ENCODE measurements at regions of chr1 and their contacts with region 1.

Region 1: GRCh38 chr1:113928941-113929749 is at the start of gene HIPK1:
- DNase-seq: peak; percentile 91 to 94
- ATAC-seq: peak; percentile 57 to 82 (median 58)
- H3K4me3 ChIP-seq: peak within 1 kb of the TSS; percentile 80
- H3K4me3 Mint-ChIP-seq: peak within 1 kb of the TSS; percentile 98
- H3K27ac ChIP-seq: peak within 1 kb of the TSS; percentile 98
- H3K27ac Mint-ChIP-seq: peak within 1 kb of the TSS; percentile 96 to 99
- H3K4me1 ChIP-seq: peaks cover 28% of the 10 kb centered on the region
- H3K4me1 Mint-ChIP-seq: peaks cover 55 to 59% of the 10 kb centered on the region in 2 donors
- H3K27me3 ChIP-seq: no peaks in the 10 kb centered on the region
- H3K27me3 Mint-ChIP-seq: no peaks in the 10 kb centered on the region
- CTCF ChIP-seq: no peak
- total RNA-seq, gene HIPK1: 238 to 283 (median 261) TPM

Region 2: GRCh38 chr1:113835642-113836307 is 93.4 kb before region 1 on chr1:
- intact Hi-C with region 1: loop called (anchors 1 kb)
- DNase-seq: peak in 1 of 2 donors; percentile 83
- ATAC-seq: peak in 2 of 3 donors; percentile 53 to 67
- H3K4me3 ChIP-seq: no peak overlapping the region
- H3K4me3 Mint-ChIP-seq: no peak overlapping the region
- H3K27ac ChIP-seq: no peak overlapping the region
- H3K27ac Mint-ChIP-seq: peak overlapping the region in 1 of 2 donors; percentile 66
- H3K4me1 ChIP-seq: no peaks in the 10 kb centered on the region
- H3K4me1 Mint-ChIP-seq: no peaks in the 10 kb centered on the region
- H3K27me3 ChIP-seq: no peaks in the 10 kb centered on the region
- H3K27me3 Mint-ChIP-seq: no peaks in the 10 kb centered on the region
- CTCF ChIP-seq: peak; percentile 74

Region 3: DNA sequence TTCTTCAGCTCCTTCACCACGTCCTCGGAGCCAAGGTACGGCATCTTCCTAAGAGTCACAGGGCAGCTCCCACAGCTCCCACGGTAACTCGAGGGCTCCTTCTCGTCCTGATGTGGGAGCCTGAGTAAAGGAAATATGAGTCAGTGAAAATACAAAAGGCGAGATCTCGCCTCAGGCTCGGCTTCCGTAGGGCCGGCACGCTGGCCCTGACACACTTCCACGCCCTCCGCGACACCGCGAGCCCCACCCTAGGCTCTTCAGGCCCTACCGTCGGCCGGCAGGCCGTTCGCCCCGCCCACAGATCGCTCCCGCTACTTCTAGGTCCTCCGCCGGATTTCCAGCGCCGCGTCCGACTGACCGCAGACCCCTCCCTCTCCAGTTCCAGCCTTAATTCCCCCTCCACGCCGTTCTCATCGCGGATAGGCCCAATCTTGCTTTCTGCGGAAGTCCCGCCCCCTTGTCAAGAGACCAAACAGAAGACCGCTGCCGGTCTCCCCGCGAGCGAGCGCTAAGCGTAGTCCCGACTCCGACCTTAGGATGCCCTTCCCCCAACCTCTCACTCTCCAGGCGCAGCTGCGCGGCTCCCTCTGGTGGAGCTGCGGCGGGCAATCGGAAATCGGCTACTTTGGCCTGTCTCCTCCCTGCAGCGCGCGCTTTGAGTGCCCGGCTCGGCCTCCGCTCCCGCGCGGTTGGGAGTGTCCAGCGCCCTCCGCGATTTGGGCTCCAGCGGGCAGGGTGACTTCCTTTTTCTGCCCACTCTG is 24.3 kb before region 1 on chr1 and contains the starts of genes AP4B1 and DCLRE1B:
- intact Hi-C with region 1: loop called (anchors 1 kb)
- DNase-seq: peak; percentile 91 to 100
- ATAC-seq: peak; percentile 91 to 98 (median 91)
- H3K4me3 ChIP-seq: peak within 1 kb of the TSS; percentile 70
- H3K4me3 Mint-ChIP-seq: peak within 1 kb of the TSS; percentile 98
- H3K27ac ChIP-seq: peak within 1 kb of the TSS; percentile 93
- H3K27ac Mint-ChIP-seq: peak within 1 kb of the TSS; percentile 99
- H3K4me1 ChIP-seq: peaks cover 32% of the 10 kb centered on the region
- H3K4me1 Mint-ChIP-seq: peaks cover 50 to 66% of the 10 kb centered on the region in 2 donors
- H3K27me3 ChIP-seq: no peaks in the 10 kb centered on the region
- H3K27me3 Mint-ChIP-seq: no peaks in the 10 kb centered on the region
- CTCF ChIP-seq: peak; percentile 62
- total RNA-seq, gene AP4B1: 64.0 to 78.7 (median 77.6) TPM
- total RNA-seq, gene DCLRE1B: 5.5 to 6.8 (median 5.9) TPM

Region 4: DNA sequence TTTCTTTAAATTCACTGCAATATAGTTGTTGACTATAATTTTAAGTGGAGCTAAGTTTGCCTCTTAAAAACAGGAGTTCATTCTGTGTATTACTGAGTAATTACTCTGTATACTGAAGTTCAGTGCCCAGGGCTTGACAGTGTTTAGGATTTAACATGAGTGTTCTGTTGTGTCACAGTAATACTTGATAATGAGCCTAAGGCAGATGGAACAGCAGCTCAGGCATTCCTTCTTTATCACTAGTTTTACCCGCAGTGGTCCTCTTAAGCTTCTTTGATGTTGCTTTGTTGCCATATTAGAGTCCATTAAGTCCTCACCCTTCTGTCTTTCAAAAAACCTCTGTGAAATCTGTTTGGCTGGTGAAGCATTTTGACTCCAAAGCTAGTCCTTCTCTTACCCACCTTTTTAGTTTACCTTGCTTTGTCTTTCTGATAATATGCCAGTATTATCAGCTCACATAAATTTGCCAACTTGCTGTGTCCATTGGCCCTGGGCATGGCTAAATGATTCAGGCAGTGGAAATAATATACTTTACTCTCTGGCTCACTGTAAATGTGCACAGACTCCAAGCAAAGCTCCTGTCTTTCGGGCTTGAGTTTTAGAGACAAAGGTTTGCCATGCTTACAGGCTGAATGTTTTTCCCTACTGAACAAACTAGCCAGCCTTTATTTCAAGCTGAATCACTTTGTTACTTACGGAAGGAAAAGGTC is 17.7 kb after region 1 on chr1:
- intact Hi-C with region 1: loop called (anchors 2 kb)
- DNase-seq: no peak
- ATAC-seq: peak in 2 of 3 donors; percentile 13 to 19
- H3K4me3 ChIP-seq: no peak overlapping the region
- H3K4me3 Mint-ChIP-seq: peak overlapping the region; percentile 63
- H3K27ac ChIP-seq: peak overlapping the region; percentile 74
- H3K27ac Mint-ChIP-seq: peak overlapping the region; percentile 82 to 85
- H3K4me1 ChIP-seq: peaks cover 19% of the 10 kb centered on the region
- H3K4me1 Mint-ChIP-seq: peaks cover 65 to 67% of the 10 kb centered on the region in 2 donors
- H3K27me3 ChIP-seq: no peaks in the 10 kb centered on the region
- H3K27me3 Mint-ChIP-seq: no peaks in the 10 kb centered on the region
- CTCF ChIP-seq: no peak

Region 5: DNA sequence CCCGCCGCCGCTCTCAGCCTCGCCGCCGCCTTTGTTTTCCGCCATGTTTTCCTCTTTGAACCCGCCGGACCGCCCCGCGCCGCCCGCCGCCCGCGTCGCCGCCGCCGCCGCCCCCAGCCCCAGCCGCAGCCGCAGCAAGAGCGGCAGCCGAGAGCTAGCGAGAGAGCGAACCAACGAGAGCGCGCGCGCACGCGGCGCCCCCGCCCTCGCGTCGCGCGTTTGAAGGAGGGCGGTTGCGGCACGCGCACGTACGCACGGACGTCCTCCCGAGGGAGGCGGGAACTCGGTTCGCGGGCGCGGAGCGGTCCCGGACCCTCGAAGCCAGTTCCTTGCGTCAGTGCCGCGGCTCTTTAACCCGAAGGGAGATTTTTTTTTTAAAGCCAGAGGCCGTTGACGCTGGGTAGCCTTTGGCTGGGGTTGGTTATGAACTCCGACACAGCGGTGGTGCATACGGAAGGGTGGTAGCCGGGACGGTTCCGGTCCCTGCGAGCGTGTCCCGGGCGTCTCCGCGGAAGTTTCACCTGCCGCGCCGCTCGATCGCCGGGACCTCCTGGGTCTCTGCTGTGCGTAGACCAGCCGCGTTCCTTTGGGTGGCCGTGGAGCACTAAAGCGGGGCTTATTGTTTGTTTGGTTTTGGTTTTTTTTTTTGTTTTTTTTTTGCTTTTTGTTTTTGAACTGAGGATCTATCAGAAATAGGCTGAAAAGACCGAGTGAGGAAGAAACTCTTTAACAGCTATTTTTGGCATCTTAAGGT is 582.1 kb after region 1 on chr1 and contains the start of gene TRIM33:
- intact Hi-C with region 1: loop called (anchors 5 kb)
- DNase-seq: peak; percentile 91 to 98
- ATAC-seq: peak; percentile 76 to 93 (median 81)
- H3K4me3 ChIP-seq: peak within 1 kb of the TSS; percentile 89
- H3K4me3 Mint-ChIP-seq: peak within 1 kb of the TSS; percentile 100
- H3K27ac ChIP-seq: peak within 1 kb of the TSS; percentile 92
- H3K27ac Mint-ChIP-seq: peak within 1 kb of the TSS; percentile 100
- H3K4me1 ChIP-seq: peaks cover 30% of the 10 kb centered on the region
- H3K4me1 Mint-ChIP-seq: peaks cover 48 to 57% of the 10 kb centered on the region in 2 donors
- H3K27me3 ChIP-seq: no peaks in the 10 kb centered on the region
- H3K27me3 Mint-ChIP-seq: no peaks in the 10 kb centered on the region
- CTCF ChIP-seq: no peak
- total RNA-seq, gene TRIM33: 70.6 to 91.5 (median 86.1) TPM